ENCODE measurements at regions of chr16 and their contacts with region 1.

Region 1: DNA sequence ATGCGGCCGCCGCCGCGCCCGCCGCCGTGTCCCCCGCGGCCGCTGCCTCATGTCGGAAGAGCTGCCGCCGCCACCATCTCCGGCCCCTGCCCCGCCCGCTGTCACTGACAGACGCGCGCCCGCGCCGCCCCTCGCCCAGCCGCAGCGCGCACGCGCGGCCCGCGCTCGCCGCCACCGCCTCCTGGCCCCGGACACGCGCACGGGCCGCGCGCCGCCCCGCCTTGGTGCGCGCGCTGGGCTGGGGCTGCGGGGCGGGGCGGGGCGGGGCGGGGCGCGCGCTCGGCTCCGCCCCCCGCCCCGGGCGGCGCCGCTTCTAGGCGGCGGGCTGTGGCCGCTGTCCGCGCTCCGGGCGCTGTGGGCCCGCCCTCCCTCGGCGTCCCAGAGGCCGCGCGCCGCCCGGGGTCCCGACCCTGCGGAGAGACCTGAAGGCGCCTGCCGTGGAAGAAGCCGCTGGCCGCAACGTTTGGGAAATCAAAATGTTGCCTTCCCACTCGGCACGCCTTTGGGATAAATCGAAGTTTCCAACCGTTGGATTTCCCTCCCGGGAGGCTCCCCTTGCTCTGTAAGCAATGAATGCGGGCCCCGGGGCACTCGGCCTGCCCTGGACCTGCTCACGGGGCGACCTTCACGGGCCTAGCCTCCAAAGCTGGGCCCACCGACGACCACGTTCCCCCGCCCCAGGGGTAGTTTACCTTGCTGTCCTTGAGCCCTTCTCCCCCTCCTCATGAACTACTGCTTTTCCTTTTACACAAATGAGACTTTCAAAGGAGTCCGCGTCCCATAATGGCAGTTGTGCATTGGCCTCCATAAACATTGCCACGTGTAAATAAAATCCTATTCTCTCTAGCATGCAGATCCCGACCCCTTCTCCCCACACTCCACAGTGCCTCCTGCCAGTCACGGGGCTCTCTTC is at the start of gene ADCY9:
- DNase-seq: peak in 1 of 2 donors; percentile 84
- H3K4me3 ChIP-seq: peak within 1 kb of the TSS; percentile 89 to 95
- H3K27ac ChIP-seq: peak within 1 kb of the TSS; percentile 82 to 86
- H3K4me1 ChIP-seq: peaks cover 5 to 10% of the 10 kb centered on the region in 2 donors
- H3K27me3 ChIP-seq: no peaks in the 10 kb centered on the region
- CTCF ChIP-seq: no peak
- total RNA-seq, gene ADCY9: 49.7 TPM

Region 2: DNA sequence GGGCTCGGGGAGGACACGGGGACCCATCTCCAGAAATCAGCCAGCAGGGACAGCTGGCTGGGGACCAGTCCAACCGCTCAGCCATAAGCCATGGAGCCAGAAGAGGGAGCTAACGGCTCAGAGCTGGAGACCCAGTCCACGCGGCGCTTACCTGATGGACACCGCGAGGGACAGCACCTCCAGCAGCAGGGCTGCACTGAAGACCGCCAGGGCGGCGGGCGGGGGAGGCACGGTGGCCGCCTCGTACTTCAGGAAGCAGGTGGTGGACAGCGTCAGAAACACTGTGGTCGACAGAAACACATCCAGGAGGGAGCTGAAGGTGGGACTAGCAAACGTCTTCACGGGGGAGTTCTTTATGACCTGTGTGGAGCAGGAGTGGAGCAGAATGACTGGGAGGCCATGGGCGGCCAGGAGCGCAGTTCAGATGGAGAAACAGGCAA is 133.5 kb before region 1 on chr16:
- intact Hi-C with region 1: loop called (anchors 2 kb)
- DNase-seq: peak in 1 of 2 donors; percentile 79
- H3K4me3 ChIP-seq: no peak overlapping the region
- H3K27ac ChIP-seq: no peak overlapping the region
- H3K4me1 ChIP-seq: no peaks in the 10 kb centered on the region
- H3K27me3 ChIP-seq: no peaks in the 10 kb centered on the region
- CTCF ChIP-seq: peak; percentile 59 to 70 (median 67)

Region 3: GRCh38 chr16:4019371-4019791 is 97.2 kb before region 1 on chr16:
- intact Hi-C with region 1: loop called (anchors 5 kb)
- DNase-seq: no peak
- H3K4me3 ChIP-seq: peak overlapping the region; percentile 36 to 55
- H3K27ac ChIP-seq: peak overlapping the region; percentile 55 to 67
- H3K4me1 ChIP-seq: peaks cover 0 to 11% of the 10 kb centered on the region in 2 donors
- H3K27me3 ChIP-seq: no peaks in the 10 kb centered on the region
- CTCF ChIP-seq: no peak

Region 4: GRCh38 chr16:4090351-4090851 is 26.2 kb before region 1 on chr16:
- intact Hi-C with region 1: loop called (anchors 2 kb)
- DNase-seq: peak in 1 of 2 donors; percentile 84
- H3K4me3 ChIP-seq: peak overlapping the region; percentile 8 to 46
- H3K27ac ChIP-seq: peak overlapping the region; percentile 69 to 90
- H3K4me1 ChIP-seq: peaks cover 19 to 51% of the 10 kb centered on the region in 2 donors
- H3K27me3 ChIP-seq: no peaks in the 10 kb centered on the region
- CTCF ChIP-seq: no peak

Region 5: GRCh38 chr16:4253394-4254150 is 137.0 kb after region 1 on chr16:
- intact Hi-C with region 1: loop called (anchors 1 kb)
- DNase-seq: peak; percentile 99 to 100
- H3K4me3 ChIP-seq: peak overlapping the region; percentile 63 to 65
- H3K27ac ChIP-seq: peak overlapping the region; percentile 90 to 91
- H3K4me1 ChIP-seq: no peaks in the 10 kb centered on the region
- H3K27me3 ChIP-seq: no peaks in the 10 kb centered on the region
- CTCF ChIP-seq: no peak

Region 6: DNA sequence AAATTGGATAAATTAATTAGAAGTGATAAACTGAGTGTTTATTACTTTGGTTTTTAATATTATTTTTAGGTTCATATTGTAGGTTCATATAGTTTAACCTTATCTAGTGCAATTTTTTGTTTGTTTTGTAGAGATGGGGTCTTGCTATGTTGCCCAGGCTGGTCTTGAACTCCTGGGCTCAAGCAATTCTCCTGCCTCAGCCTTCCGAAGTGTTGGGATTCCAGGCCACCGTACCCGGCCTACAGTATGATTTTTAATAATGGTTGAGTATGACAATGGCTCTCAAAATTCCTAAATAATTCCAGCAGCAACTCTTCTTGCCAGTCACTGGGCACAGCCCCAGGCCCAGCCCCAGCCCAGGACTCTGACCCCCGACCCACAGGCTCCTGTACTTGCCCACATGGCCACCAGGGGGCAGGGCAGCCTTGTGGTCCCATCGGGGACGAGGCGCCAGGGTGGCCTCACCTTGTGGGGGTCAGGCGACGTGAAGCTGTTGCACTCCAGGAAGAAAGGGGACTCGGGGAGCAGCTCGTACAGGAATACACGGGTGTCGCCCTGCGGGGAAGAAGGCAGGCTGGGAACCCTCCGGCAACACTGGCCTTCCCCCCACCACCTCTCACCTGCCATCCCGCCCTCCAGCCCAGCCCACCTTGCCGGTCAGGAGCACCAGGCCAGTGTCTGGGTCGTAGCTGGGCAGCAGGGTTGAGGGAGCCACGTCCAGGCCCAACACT is 242.4 kb after region 1 on chr16:
- intact Hi-C with region 1: no loop called
- DNase-seq: peak in 1 of 2 donors; percentile 80
- H3K4me3 ChIP-seq: no peak overlapping the region
- H3K27ac ChIP-seq: no peak overlapping the region
- H3K4me1 ChIP-seq: no peaks in the 10 kb centered on the region
- H3K27me3 ChIP-seq: no peaks in the 10 kb centered on the region
- CTCF ChIP-seq: peak; percentile 98 to 99 (median 99)

Measured in ascending aorta (tissue), 2 donors.